MCF 10A (cell line): ENCODE measurements at regions of chr2 and their contacts with region 1.

Region 1: DNA sequence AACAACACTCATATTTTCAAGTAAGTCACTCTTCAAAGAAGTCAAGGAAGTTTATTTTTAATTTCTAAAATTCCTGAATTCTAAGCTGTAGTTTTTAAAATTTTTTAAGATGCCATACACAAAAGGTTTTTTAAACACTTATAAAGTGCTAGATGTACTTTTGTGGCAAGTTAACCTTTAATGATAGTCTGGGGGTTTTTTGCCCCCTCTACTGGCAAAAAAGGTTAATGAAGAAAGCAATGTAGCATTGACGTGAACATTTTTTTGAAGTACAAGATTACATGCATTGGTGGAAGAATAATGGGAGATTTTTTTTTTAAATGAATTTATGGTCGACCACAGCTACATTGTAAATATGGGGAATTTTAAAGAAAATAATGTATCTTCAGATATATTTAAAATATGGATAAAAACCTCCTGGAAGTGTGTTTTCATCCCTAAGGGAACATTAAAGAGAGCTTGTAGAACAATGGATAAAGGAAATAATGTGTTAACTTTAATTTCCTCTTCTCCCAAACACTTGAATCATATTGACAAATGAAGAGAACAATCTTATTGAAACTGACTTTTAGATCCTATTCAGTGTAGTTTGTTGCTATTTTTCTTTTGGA is 12.6 kb downstream of the ITPRID2 start:
- DNase-seq: peak; percentile 54
- H3K4me3 Mint-ChIP-seq: no peak overlapping the region
- H3K27ac Mint-ChIP-seq: peak overlapping the region; percentile 67
- H3K4me1 Mint-ChIP-seq: peaks cover 12% of the 10 kb centered on the region
- H3K27me3 Mint-ChIP-seq: no peaks in the 10 kb centered on the region
- CTCF ChIP-seq: peak; percentile 39

Region 2: DNA sequence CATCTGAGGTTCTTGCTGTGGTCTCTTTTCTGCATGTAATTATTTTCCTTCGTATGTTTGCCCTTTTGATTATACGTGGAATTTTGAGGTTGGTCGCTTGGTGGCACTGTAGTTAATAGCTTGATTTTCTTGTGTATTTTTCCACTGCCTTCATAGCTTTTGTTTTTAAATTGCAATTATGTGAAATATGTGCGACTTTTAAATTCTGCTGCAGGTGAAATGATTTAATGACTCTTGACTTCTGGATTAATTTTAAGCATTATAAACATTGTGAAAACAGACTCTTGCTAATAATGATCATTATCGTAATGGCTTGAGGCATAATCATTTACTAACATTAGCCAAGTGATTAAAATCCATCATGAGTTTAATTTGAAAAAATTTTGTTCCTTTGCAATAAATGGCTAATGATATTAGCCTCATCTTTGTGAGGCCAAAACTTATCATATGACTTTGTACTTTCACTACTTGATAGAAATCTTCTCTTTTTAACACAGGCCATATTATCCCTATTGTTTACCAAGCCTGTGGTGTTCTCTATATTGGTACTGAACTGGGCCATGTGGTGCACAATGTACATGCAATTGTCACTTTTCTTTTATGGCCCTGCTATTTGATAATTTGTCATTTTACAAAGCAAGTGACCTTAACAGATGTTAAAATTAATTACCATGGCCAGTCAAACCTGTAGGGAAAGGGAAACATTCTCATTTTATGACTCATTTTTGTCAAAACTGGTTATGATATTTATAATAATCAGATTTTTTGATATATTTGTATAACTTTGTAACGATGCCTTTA is 161.0 kb before region 1 on chr2:
- CTCF ChIA-PET with region 1: interaction called, 34 read pairs
- POLR2A ChIA-PET with region 1: interaction called, 3 read pairs
- intact Hi-C with region 1: loop called (anchors 1 kb)
- DNase-seq: peak; percentile 69
- H3K4me3 Mint-ChIP-seq: no peak overlapping the region
- H3K27ac Mint-ChIP-seq: no peak overlapping the region
- H3K4me1 Mint-ChIP-seq: peaks cover 6% of the 10 kb centered on the region
- H3K27me3 Mint-ChIP-seq: no peaks in the 10 kb centered on the region
- CTCF ChIP-seq: peak; percentile 53

Region 3: DNA sequence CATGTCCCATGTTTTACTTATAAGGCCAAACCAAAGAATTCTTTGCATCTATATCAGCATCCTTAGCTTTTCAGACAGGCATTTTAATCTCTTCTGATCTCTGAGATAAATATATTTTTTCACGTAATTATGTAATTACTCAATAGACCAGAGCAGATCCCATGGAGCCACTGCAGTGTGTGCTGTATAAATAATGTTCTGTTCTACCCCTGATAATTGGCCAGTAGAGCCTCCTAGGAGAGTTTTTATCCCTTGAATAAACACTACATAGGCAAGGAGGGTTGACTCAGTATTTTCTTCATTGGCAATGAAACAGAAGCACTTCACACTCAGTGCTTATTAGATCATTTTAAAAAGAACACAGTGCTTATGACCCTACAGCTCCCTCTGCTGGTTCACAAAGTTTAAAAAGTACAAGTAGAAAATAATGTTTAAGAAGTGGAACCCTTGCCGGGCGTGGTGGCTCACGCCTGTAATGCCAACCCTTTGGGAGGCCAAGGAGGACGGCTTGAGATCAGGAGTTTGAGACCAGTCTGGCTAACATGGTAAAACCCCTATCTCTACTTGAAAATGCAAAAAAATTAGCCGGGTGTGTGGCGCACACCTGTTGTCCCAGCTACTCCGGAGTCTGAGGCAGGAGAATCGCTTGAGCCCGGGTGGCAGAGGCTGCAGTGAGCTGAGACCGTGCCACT is 173.5 kb after region 1 on chr2:
- CTCF ChIA-PET with region 1: interaction called, 30 read pairs
- POLR2A ChIA-PET with region 1: no interaction called
- intact Hi-C with region 1: loop called (anchors 1 kb)
- DNase-seq: peak; percentile 85
- H3K4me3 Mint-ChIP-seq: no peak overlapping the region
- H3K27ac Mint-ChIP-seq: no peak overlapping the region
- H3K4me1 Mint-ChIP-seq: no peaks in the 10 kb centered on the region
- H3K27me3 Mint-ChIP-seq: no peaks in the 10 kb centered on the region
- CTCF ChIP-seq: peak; percentile 70